Right ventricle myocardium superior (tissue), 1 donor: ENCODE measurements at regions of chr21 and their contacts with region 1.

Region 1: GRCh38 chr21:46285761-46286496 is at the start of gene YBEY:
- DNase-seq: peak; percentile 94
- ATAC-seq: peak; percentile 98
- total RNA-seq, gene YBEY: 19.2 TPM

Region 2: GRCh38 chr21:46323227-46324128 is 37.5 kb after region 1 on chr21 and contains the start of gene C21orf58:
- intact Hi-C with region 1: loop called (anchors 2 kb)
- DNase-seq: peak; percentile 99
- ATAC-seq: peak; percentile 94
- total RNA-seq, gene C21orf58: 1.0 TPM

Region 3: GRCh38 chr21:46564391-46564790 is 278.5 kb after region 1 on chr21:
- intact Hi-C with region 1: no loop called
- DNase-seq: no peak
- ATAC-seq: no peak

Region 4: DNA sequence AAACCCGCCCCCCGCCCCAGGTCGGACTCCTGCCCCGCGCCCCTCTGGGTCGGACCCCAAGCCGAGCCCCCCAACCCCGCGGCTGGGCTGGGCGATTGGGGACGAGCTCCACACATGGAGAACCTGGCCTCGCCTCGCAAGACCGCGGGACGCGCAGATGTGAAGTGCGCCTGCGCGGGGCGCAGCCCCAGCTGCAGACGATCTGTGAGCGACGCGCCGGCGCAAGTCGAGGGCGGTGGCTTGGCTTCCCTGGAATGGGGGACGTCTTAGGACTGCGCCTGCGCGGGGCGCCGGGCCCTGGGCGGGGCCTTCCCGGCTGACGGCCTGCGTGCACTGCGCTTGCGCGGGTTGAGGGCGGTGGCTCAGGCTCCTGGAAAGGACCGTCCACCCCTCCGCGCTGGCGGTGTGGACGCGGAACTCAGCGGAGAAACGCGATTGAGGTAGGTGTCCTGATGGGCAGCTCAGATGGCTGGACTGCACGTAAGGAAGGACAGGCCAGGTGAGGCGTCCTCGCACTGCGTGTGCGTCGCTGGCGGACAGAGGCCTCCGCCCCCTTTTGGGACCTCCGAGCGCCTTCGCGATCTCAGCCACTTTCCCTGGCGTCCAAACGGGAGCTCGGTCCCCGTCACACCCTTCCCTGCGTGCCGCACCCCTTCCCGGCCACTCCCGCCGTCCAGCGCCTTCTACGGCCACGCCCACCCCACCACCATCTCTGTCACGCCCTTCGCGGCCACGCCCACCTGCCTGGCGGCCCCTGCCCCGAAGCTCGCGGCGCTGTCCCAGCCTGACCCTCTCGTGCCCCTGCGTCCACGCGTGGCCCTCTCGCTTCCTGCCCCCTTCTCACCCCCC is 349.6 kb after region 1 on chr21 and contains the start of gene PRMT2:
- intact Hi-C with region 1: no loop called
- DNase-seq: peak; percentile 98
- ATAC-seq: peak; percentile 98
- total RNA-seq, gene PRMT2: 49.8 TPM